Endothelial cell of umbilical vein (primary cell): ENCODE measurements at regions of chr10 and their contacts with region 1.

Region 1: GRCh38 chr10:53052521-53053164 is 280.1 kb upstream of the MBL2 start:
- DNase-seq: no peak
- H3K4me3 ChIP-seq: no peak overlapping the region
- H3K27ac ChIP-seq: no peak overlapping the region
- H3K4me1 ChIP-seq: no peaks in the 10 kb centered on the region
- H3K27me3 ChIP-seq: no peaks in the 10 kb centered on the region
- CTCF ChIP-seq: no peak
- POLR2A ChIP-seq: no peak

Region 2: DNA sequence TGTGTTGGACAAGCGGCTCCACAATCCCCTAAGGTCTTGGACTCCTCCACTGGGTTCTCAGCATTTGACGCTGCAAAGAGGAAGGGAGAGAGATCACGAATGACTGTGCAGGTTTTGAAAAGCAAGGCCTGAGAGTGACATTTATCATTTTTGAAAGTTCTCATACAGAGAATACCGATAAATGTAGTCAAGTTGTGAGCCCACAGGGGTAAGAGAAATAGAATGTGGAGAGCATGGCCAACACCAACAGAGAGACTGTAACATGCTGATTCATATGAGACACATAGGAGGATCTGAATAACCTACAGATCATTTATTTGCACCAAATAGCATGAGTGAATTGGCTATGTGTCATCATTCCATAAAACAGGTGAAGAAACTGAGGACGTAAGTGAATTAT is 49.5 kb before region 1 on chr10:
- CTCF ChIA-PET with region 1: no interaction called
- POLR2A ChIA-PET with region 1: no interaction called
- dilution Hi-C with region 1: no loop called
- intact Hi-C with region 1: loop called (anchors 5 kb)
- DNase-seq: no peak
- H3K4me3 ChIP-seq: no peak overlapping the region
- H3K27ac ChIP-seq: no peak overlapping the region
- H3K4me1 ChIP-seq: no peaks in the 10 kb centered on the region
- H3K27me3 ChIP-seq: no peaks in the 10 kb centered on the region
- CTCF ChIP-seq: no peak
- POLR2A ChIP-seq: no peak